CD4-positive, alpha-beta T cell (primary cell): ENCODE measurements at regions of chr14 and their contacts with region 1.

Region 1: DNA sequence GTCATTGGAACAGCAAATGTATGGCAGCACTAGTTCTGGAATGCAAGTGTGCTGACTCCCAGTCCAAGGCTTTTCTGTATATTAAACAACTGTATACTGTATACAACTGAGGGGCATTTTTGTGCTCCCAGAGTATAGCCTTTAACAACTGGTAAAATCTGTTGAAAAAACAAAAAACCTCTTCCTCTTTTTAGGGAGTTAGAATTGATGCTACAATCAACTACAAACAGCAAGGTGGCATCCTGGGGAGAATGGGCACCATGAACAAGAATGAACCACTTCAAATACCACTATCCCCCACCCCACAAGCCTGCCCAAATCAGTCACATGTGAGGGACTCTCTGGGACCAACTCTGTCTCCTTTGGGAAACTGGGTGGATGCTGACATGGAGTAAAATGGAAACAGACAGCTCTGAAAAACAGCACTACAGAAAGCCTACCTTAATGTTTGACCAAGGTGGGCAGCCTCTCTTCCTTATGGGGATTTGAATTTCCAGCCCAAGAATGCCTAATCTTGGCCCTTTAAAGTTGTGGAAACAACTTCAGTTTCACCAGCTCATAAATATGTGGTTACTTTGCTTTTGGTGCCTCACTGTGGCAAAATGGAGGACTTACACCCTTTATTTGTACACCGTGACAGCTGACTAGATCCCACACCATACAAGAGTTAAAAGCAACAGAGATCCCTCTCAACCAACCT is 7.5 kb downstream of the VTI1B start:
- DNase-seq: peak in 9 of 14 experiments; percentile 2 to 78 (median 19)
- ATAC-seq: peak; percentile 94
- H3K4me3 ChIP-seq: no peak overlapping the region
- H3K4me3 Mint-ChIP-seq: no peak overlapping the region
- H3K27ac ChIP-seq: no peak overlapping the region
- H3K27ac Mint-ChIP-seq: peak overlapping the region; percentile 54
- H3K4me1 ChIP-seq: peaks cover 19% of the 10 kb centered on the region
- H3K4me1 Mint-ChIP-seq: peaks cover 63% of the 10 kb centered on the region
- H3K27me3 ChIP-seq: no peaks in the 10 kb centered on the region
- H3K27me3 Mint-ChIP-seq: no peaks in the 10 kb centered on the region
- CTCF ChIP-seq: peak; percentile 67

Region 2: GRCh38 chr14:67276131-67276530 is 390.8 kb before region 1 on chr14:
- CTCF ChIA-PET with region 1: no interaction called
- POLR2A ChIA-PET with region 1: no interaction called
- intact Hi-C with region 1: no loop called
- DNase-seq: no peak
- ATAC-seq: no peak
- H3K4me3 ChIP-seq: no peak overlapping the region
- H3K4me3 Mint-ChIP-seq: no peak overlapping the region
- H3K27ac ChIP-seq: no peak overlapping the region
- H3K27ac Mint-ChIP-seq: no peak overlapping the region
- H3K4me1 ChIP-seq: no peaks in the 10 kb centered on the region
- H3K4me1 Mint-ChIP-seq: peaks cover 25% of the 10 kb centered on the region
- H3K27me3 ChIP-seq: no peaks in the 10 kb centered on the region
- H3K27me3 Mint-ChIP-seq: no peaks in the 10 kb centered on the region
- CTCF ChIP-seq: no peak

Region 3: GRCh38 chr14:67426983-67427606 is 239.8 kb before region 1 on chr14:
- CTCF ChIA-PET with region 1: interaction called, 11 read pairs
- POLR2A ChIA-PET with region 1: no interaction called
- intact Hi-C with region 1: loop called (anchors 1 to 5 kb)
- DNase-seq: peak; percentile 59 to 87 (median 67)
- ATAC-seq: peak; percentile 96
- H3K4me3 ChIP-seq: no peak overlapping the region
- H3K4me3 Mint-ChIP-seq: no peak overlapping the region
- H3K27ac ChIP-seq: no peak overlapping the region
- H3K27ac Mint-ChIP-seq: no peak overlapping the region
- H3K4me1 ChIP-seq: peaks cover 5% of the 10 kb centered on the region
- H3K4me1 Mint-ChIP-seq: no peaks in the 10 kb centered on the region
- H3K27me3 ChIP-seq: peaks cover 0 to 9% of the 10 kb centered on the region in 2 experiments
- H3K27me3 Mint-ChIP-seq: peaks cover 20% of the 10 kb centered on the region
- CTCF ChIP-seq: peak; percentile 84

Region 4: GRCh38 chr14:67526676-67527459 is 140.0 kb before region 1 on chr14:
- CTCF ChIA-PET with region 1: no interaction called
- POLR2A ChIA-PET with region 1: no interaction called
- intact Hi-C with region 1: loop called (anchors 5 kb)
- DNase-seq: peak in 9 of 14 experiments; percentile 10 to 68 (median 36)
- ATAC-seq: peak; percentile 70
- H3K4me3 ChIP-seq: no peak overlapping the region
- H3K4me3 Mint-ChIP-seq: no peak overlapping the region
- H3K27ac ChIP-seq: no peak overlapping the region
- H3K27ac Mint-ChIP-seq: no peak overlapping the region
- H3K4me1 ChIP-seq: peaks cover 5% of the 10 kb centered on the region
- H3K4me1 Mint-ChIP-seq: no peaks in the 10 kb centered on the region
- H3K27me3 ChIP-seq: peaks cover 13 to 23% of the 10 kb centered on the region in 2 experiments
- H3K27me3 Mint-ChIP-seq: peaks cover 44% of the 10 kb centered on the region
- CTCF ChIP-seq: peak; percentile 59

Region 5: DNA sequence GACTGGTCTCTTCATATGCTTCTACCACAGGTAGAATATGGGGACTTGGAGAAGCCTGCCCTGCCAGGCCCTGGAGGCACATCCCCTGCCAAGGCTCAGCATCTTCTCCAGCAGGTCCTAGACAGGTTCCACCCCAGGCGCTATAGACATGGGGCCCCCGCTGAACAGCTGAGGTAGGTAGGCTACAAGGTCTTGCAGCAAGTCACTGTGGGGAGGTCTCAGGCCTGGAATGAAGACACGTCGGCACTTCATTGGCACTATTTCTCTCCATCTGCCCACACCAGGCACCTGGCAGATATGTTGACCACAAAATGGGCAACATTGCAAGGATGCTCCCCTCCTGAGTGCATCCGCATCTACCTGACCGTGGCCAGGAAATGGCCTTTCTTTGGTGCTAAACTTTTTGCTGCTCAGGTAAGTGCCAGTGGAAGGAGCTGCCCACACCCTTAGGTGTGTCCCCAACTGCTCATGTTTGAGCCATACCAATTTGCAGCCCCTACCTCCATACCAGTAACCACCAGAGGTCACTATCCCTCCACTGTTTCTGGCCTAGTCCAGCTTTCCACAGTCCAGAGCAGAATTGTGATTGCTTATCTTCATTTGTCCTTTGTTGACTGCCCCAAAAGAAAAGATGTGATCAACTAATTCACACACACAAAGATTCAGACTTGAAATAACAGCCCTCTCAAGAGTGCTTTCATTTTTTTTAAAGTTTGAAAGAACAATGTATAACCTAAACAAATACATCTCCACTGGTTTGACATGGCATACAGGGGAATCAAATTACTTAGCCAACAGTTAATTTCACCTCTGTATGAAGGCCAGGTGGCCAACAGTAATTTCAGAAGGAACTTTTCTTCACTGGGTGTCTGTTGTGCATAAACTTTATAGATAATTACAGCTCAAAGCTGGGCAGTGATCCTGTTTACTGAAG is 82.9 kb before region 1 on chr14:
- CTCF ChIA-PET with region 1: interaction called, 3 read pairs
- POLR2A ChIA-PET with region 1: no interaction called
- intact Hi-C with region 1: loop called (anchors 1 to 2 kb)
- DNase-seq: peak in 7 of 14 experiments; percentile 13 to 67 (median 42)
- ATAC-seq: peak; percentile 51
- H3K4me3 ChIP-seq: no peak overlapping the region
- H3K4me3 Mint-ChIP-seq: no peak overlapping the region
- H3K27ac ChIP-seq: no peak overlapping the region
- H3K27ac Mint-ChIP-seq: no peak overlapping the region
- H3K4me1 ChIP-seq: no peaks in the 10 kb centered on the region
- H3K4me1 Mint-ChIP-seq: no peaks in the 10 kb centered on the region
- H3K27me3 ChIP-seq: no peaks in the 10 kb centered on the region
- H3K27me3 Mint-ChIP-seq: no peaks in the 10 kb centered on the region
- CTCF ChIP-seq: peak; percentile 56

Region 6: GRCh38 chr14:67599698-67600561 is 67.0 kb before region 1 on chr14 and contains the start of gene PIGH:
- CTCF ChIA-PET with region 1: interaction called, 15 read pairs
- POLR2A ChIA-PET with region 1: interaction called, 6 read pairs
- intact Hi-C with region 1: loop called (anchors 5 kb)
- DNase-seq: peak; percentile 87 to 97 (median 94)
- ATAC-seq: peak; percentile 95
- H3K4me3 ChIP-seq: peak within 1 kb of the TSS; percentile 98
- H3K4me3 Mint-ChIP-seq: peak within 1 kb of the TSS; percentile 92
- H3K27ac ChIP-seq: peak within 1 kb of the TSS; percentile 56 to 83
- H3K27ac Mint-ChIP-seq: peak within 1 kb of the TSS; percentile 82
- H3K4me1 ChIP-seq: peaks cover 24% of the 10 kb centered on the region
- H3K4me1 Mint-ChIP-seq: peaks cover 49% of the 10 kb centered on the region
- H3K27me3 ChIP-seq: no peaks in the 10 kb centered on the region
- H3K27me3 Mint-ChIP-seq: no peaks in the 10 kb centered on the region
- CTCF ChIP-seq: peak; percentile 75
- total RNA-seq, gene PIGH: 66.0 to 69.7 TPM

Region 7: DNA sequence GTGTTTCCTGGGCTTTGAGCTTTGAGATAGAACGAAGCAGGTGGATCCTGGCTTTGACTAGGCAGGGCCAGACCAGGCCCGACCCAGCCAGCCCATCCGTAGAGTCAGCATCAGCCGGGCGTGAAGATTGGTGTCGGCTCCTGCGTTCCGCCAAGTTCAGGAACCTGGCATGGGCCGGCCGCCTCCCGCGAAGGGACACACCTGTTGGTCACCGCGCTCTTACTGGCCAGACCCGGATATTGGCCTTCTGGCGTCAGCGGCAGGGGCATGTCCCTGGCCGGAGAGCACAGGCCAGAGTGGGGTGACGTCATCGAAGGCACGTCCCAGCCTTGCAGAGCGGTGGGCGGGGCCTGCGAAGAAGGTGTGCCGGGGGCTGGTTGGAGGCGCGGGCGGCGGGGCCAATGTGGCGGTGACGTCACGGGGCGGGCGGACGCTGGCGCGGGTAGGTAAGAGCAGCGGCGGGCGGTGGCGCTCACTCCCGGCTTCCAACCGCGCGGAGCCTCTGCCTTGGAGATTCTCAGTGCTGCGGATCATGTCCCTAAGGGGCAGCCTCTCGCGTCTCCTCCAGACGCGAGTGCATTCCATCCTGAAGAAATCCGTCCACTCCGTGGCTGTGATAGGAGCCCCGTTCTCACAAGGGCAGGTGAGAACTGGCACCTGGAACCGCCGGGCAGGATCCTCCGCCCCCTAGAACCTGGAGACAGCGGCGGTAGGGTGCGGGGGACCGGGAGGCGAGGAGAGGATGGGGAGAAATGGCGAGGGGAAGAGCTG is 47.3 kb before region 1 on chr14 and contains the start of gene ARG2:
- CTCF ChIA-PET with region 1: interaction called, 11 read pairs
- POLR2A ChIA-PET with region 1: interaction called, 7 read pairs
- intact Hi-C with region 1: loop called (anchors 1 to 2 kb)
- DNase-seq: peak; percentile 92 to 99 (median 97)
- ATAC-seq: peak; percentile 90
- H3K4me3 ChIP-seq: peak within 1 kb of the TSS; percentile 88
- H3K4me3 Mint-ChIP-seq: peak within 1 kb of the TSS; percentile 94
- H3K27ac ChIP-seq: peak within 1 kb of the TSS; percentile 83 to 86
- H3K27ac Mint-ChIP-seq: peak within 1 kb of the TSS; percentile 83
- H3K4me1 ChIP-seq: peaks cover 21% of the 10 kb centered on the region
- H3K4me1 Mint-ChIP-seq: peaks cover 44% of the 10 kb centered on the region
- H3K27me3 ChIP-seq: peaks cover 0 to 4% of the 10 kb centered on the region in 2 experiments
- H3K27me3 Mint-ChIP-seq: no peaks in the 10 kb centered on the region
- CTCF ChIP-seq: no peak
- total RNA-seq, gene ARG2: 3.7 to 3.9 TPM